OCI-LY7 (cell line): ENCODE measurements at regions of chr9 and their contacts with region 1.

Region 1: GRCh38 chr9:104747558-104748358 is at the start of gene NIPSNAP3A:
- DNase-seq: peak; percentile 88
- H3K4me3 ChIP-seq: peak within 1 kb of the TSS; percentile 93
- H3K27ac ChIP-seq: peak within 1 kb of the TSS; percentile 78
- H3K4me1 ChIP-seq: peaks cover 43% of the 10 kb centered on the region
- CTCF ChIP-seq: no peak
- total RNA-seq, gene NIPSNAP3A: 20.2 and 25.2 TPM in 2 replicates

Region 2: GRCh38 chr9:104093647-104094533 is 653.9 kb before region 1 on chr9 and contains the start of gene SMC2:
- CTCF ChIA-PET with region 1: no interaction called
- POLR2A ChIA-PET with region 1: interaction called, 12 read pairs
- intact Hi-C with region 1: loop called (anchors 5 kb)
- DNase-seq: peak; percentile 93
- H3K4me3 ChIP-seq: peak within 1 kb of the TSS; percentile 85
- H3K27ac ChIP-seq: peak within 1 kb of the TSS; percentile 82
- H3K4me1 ChIP-seq: peaks cover 52% of the 10 kb centered on the region
- CTCF ChIP-seq: no peak
- total RNA-seq, gene SMC2: 56.4 and 76.6 TPM in 2 replicates

Region 3: GRCh38 chr9:104386425-104387069 is 361.2 kb before region 1 on chr9:
- CTCF ChIA-PET with region 1: no interaction called
- POLR2A ChIA-PET with region 1: no interaction called
- intact Hi-C with region 1: loop called (anchors 2 kb)
- DNase-seq: peak; percentile 30
- H3K4me3 ChIP-seq: no peak overlapping the region
- H3K27ac ChIP-seq: no peak overlapping the region
- H3K4me1 ChIP-seq: no peaks in the 10 kb centered on the region
- CTCF ChIP-seq: peak; percentile 85

Region 4: GRCh38 chr9:104682642-104683041 is 65.1 kb before region 1 on chr9:
- CTCF ChIA-PET with region 1: no interaction called
- POLR2A ChIA-PET with region 1: no interaction called
- intact Hi-C with region 1: loop called (anchors 5 kb)
- DNase-seq: peak; percentile 62
- H3K4me3 ChIP-seq: no peak overlapping the region
- H3K27ac ChIP-seq: no peak overlapping the region
- H3K4me1 ChIP-seq: peaks cover 4% of the 10 kb centered on the region
- CTCF ChIP-seq: peak; percentile 82

Region 5: GRCh38 chr9:104774831-104775573 is 27.2 kb after region 1 on chr9:
- CTCF ChIA-PET with region 1: no interaction called
- POLR2A ChIA-PET with region 1: interaction called, 52 read pairs
- intact Hi-C with region 1: loop called (anchors 2 kb)
- DNase-seq: peak; percentile 59
- H3K4me3 ChIP-seq: peak overlapping the region; percentile 64
- H3K27ac ChIP-seq: peak overlapping the region; percentile 22
- H3K4me1 ChIP-seq: peaks cover 69% of the 10 kb centered on the region
- CTCF ChIP-seq: no peak